Common myeloid progenitor, CD34-positive (primary cell): ENCODE measurements at regions of chr1 and their contacts with region 1.

Region 1: GRCh38 chr1:63691701-63692425 is 82.0 kb upstream of the ROR1 start:
- DNase-seq: peak; percentile 72 to 86 (median 82)
- H3K4me3 ChIP-seq: no peak overlapping the region
- H3K27ac ChIP-seq: no peak overlapping the region
- H3K4me1 ChIP-seq: no peaks in the 10 kb centered on the region
- H3K27me3 ChIP-seq: peaks cover 0 to 1% (median 0%) of the 10 kb centered on the region in 5 experiments

Region 2: GRCh38 chr1:63621698-63622097 is 70.2 kb before region 1 on chr1:
- CTCF ChIA-PET with region 1: no interaction called
- POLR2A ChIA-PET with region 1: no interaction called
- DNase-seq: no peak
- H3K4me3 ChIP-seq: no peak overlapping the region
- H3K27ac ChIP-seq: no peak overlapping the region
- H3K4me1 ChIP-seq: peaks cover 0 to 10% (median 3%) of the 10 kb centered on the region in 4 experiments
- H3K27me3 ChIP-seq: no peaks in the 10 kb centered on the region

Region 3: DNA sequence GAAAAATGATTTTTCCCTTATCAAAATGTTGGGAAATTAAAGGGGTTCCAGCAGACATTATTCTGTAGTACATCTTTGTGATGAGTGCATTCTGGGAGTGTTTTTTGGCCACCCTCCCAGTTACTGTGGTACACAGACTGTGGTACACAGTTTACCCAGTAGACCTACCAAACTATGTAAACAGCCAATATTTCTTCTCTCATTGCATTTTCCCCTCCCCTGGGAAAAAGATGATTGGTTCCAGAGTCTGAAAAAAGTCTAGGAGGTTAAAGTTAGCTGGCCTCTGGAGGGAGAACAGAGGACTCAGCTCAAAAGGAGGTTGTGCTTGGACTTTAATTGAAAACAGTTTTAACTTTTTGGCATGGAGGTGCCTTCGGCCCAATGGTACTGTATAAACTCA is 56.2 kb before region 1 on chr1:
- CTCF ChIA-PET with region 1: no interaction called
- POLR2A ChIA-PET with region 1: no interaction called
- DNase-seq: no peak
- H3K4me3 ChIP-seq: no peak overlapping the region
- H3K27ac ChIP-seq: no peak overlapping the region
- H3K4me1 ChIP-seq: peaks cover 0 to 10% (median 3%) of the 10 kb centered on the region in 4 experiments
- H3K27me3 ChIP-seq: no peaks in the 10 kb centered on the region

Region 4: GRCh38 chr1:63679076-63679475 is 12.8 kb before region 1 on chr1:
- CTCF ChIA-PET with region 1: interaction called, 13 read pairs
- POLR2A ChIA-PET with region 1: no interaction called
- DNase-seq: no peak
- H3K4me3 ChIP-seq: no peak overlapping the region
- H3K27ac ChIP-seq: no peak overlapping the region
- H3K4me1 ChIP-seq: no peaks in the 10 kb centered on the region
- H3K27me3 ChIP-seq: no peaks in the 10 kb centered on the region

Region 5: DNA sequence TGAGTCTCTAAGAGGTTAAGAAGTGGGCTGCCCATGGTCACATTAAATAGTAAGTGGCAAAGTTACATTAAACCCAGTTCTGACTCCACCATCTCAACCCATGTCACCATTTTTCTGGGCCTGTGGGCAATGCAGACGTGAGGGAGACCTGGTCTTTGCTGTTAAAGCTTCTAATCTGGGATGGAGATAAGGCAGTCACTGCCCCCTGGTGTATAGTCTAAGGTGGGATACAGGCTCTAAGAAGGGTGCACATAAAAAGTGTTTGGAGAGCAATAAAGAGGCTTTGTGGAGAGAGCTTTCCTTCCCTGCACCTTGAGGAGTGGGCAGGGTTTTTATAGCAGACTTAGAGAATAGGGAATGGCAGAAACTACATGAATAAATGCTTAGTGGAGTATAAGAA is 223.3 kb after region 1 on chr1:
- CTCF ChIA-PET with region 1: interaction called, 11 read pairs
- POLR2A ChIA-PET with region 1: no interaction called
- DNase-seq: peak; percentile 34 to 50 (median 39)
- H3K4me3 ChIP-seq: no peak overlapping the region
- H3K27ac ChIP-seq: no peak overlapping the region
- H3K4me1 ChIP-seq: peaks cover 0 to 4% (median 2%) of the 10 kb centered on the region in 4 experiments
- H3K27me3 ChIP-seq: peaks cover 0 to 4% (median 0%) of the 10 kb centered on the region in 5 experiments

Region 6: DNA sequence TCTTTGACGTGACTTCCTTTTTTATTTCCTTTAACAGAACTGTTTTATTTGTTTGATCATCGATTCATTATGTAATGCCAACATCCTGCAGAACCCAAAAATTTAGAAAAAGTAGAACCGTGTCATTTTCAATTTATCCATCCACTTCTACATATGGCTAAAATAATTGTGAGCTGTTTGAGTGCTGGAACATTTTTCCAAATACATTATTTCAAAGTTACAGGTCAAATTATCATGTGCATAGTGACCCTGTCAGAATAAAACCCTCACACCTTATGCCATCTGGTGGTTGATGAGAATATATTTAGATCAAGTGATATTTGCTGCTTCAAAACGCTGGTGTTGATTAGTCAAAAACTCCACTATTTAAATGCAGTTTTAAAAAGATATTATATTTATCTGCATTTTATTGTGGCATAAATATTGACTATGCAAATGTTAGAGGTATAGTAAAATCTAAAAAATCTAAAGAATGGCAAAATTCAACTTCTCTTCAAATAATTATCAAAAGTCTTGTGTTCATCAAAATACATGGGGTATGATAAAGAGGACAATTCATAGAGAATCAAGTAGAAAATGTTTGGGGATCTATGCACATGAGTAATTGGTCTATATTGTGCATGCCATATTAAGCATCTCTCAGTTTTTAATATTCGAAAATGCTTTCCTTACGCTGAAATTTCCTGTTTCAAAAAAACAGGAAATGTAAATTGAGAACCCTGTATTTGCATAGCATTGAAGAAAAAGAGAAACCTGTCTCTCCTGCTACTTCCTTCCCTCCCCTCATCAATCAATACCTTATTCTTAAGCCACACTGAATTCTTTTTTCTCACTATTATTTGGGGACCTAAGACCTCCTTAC is 551.3 kb after region 1 on chr1:
- CTCF ChIA-PET with region 1: interaction called, 20 read pairs
- POLR2A ChIA-PET with region 1: no interaction called
- DNase-seq: peak; percentile 40 to 61 (median 60)
- H3K4me3 ChIP-seq: peak overlapping the region in 1 of 7 experiments; percentile 13
- H3K27ac ChIP-seq: no peak overlapping the region
- H3K4me1 ChIP-seq: peaks cover 0 to 13% (median 9%) of the 10 kb centered on the region in 4 experiments
- H3K27me3 ChIP-seq: no peaks in the 10 kb centered on the region